Posterior vena cava (tissue), 2 donors: ENCODE measurements at regions of chr9 and their contacts with region 1.

Region 1: DNA sequence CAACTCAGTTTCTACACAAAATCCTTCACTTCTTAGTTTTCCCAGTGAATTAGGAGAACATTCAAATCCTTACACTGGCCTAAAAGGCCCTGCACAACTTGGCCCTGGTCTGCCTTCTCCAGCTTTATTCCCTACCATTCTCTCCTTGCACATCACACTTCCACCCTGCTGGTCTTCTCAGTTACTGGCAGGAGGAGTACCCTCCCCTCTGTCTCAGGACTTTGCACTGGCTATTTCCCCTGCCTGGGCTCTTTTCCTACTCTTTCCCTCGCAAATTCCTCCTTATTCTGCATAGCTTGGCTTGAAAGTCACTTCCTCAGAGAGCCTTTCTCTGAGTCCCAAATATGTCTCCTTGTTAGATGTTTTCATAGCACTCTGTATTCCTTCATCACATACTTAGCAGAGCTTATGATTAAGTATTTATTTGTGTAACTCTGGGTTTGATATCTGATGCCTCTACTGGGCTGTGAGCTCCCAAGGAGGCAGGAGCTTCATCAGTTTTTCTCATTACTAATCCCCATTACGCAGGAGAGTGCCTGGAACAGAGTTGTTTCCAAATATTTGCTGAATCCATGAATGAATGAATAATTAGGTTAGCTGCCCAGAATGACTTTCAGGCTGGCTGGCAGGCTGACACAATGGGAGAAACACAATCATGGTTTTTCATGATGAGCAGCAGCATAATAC is 159.8 kb upstream of the KLF9 start:
- DNase-seq: peak; percentile 85

Region 2: DNA sequence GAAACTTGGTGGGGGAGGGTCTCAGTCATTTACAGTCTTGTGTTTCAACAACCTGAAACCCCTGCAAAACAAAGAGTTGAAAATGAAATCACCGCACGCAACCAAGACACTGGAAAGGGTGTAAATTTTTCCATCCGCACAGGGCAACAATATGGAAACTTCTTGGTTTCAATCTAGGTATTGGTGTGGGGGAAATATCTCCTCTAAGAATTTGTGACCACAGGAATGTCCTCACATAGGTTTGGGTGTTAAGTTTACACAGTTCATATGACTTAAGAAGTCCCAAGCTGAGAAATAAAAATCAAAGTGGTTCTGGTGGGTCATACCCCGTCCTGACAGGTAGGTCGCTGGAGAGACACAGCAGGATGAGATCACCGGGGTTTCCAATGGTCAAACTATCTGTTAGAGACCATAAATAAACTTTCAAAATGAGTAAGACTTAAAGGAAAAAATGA is 1921.1 kb before region 1 on chr9:
- intact Hi-C with region 1: loop called in 1 of 2 experiments (anchors 5 kb)
- DNase-seq: no peak

Region 3: GRCh38 chr9:70419546-70420266 is 154.6 kb before region 1 on chr9:
- intact Hi-C with region 1: loop called in 1 of 2 experiments (anchors 5 kb)
- DNase-seq: peak; percentile 99